ENCODE measurements at regions of chr9 and their contacts with region 1.

Region 1: DNA sequence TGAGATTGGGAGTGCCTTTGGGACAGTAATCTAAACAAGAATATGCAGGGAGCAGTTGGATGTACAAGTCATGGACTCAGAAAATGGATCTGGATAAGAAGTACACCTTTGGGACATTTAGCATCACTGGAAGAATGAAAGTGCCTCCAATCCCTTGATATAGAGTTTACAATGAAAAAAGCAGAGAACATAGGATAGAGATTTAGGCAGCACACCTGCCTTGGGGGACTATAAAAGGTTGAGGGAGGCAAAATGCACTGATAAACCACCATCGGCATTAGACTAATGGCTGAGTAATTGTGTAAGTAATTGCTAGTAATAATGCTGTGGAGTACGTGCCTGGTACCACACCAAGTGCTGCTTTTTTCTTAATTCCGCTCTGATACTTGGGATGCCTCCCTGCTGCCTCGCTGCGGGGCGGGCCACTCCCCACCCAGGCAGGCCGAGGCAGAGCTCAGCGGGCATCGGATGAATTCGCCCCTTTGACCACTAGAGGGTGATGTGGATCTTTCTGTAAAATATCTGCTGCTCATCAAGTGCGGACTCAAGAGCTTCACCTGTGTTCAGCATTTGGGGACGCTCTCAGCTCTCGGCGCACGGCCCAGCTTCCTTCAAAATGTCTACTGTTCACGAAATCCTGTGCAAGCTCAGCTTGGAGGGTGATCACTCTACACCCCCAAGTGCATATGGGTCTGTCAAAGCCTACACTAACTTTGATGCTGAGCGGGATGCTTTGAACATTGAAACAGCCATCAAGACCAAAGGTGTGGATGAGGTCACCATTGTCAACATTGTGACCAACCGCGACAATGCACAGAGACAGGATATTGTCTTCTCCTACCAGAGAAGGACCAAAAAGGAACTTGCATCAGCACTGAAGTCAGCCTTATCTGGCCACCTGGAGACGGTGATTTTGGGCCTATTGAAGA is 99.9 kb downstream of the ANKRD18B start:
- DNase-seq: peak; percentile 78
- H3K4me3 Mint-ChIP-seq: no peak overlapping the region
- H3K27ac Mint-ChIP-seq: no peak overlapping the region
- H3K4me1 Mint-ChIP-seq: peaks cover 4% of the 10 kb centered on the region
- H3K27me3 Mint-ChIP-seq: peaks cover 28% of the 10 kb centered on the region

Region 2: GRCh38 chr9:33721674-33722358 is 97.9 kb after region 1 on chr9:
- CTCF ChIA-PET with region 1: interaction called, 42 read pairs
- POLR2A ChIA-PET with region 1: interaction called, 4 read pairs
- DNase-seq: peak; percentile 88
- H3K4me3 Mint-ChIP-seq: no peak overlapping the region
- H3K27ac Mint-ChIP-seq: no peak overlapping the region
- H3K4me1 Mint-ChIP-seq: peaks cover 8% of the 10 kb centered on the region
- H3K27me3 Mint-ChIP-seq: peaks cover 23% of the 10 kb centered on the region